A549 (cell line): ENCODE measurements at regions of chr17 and their contacts with region 1.

Region 1: GRCh38 chr17:40168262-40168832 is 8.9 kb upstream of the RAPGEFL1 start:
- DNase-seq: peak; percentile 77
- ATAC-seq: peak; percentile 76 to 83
- H3K4me3 ChIP-seq: no peak overlapping the region
- H3K27ac ChIP-seq: 0 out of 6 replicates have a peak overlapping the region, but pooled peaks of 1 of the 2 experiments have one; percentile 18
- H3K4me1 ChIP-seq: peaks cover 4% of the 10 kb centered on the region; the same call in 2 of the 3 replicates
- CTCF ChIP-seq: peak; percentile 84
- EP300 ChIP-seq: no peak
- POLR2A ChIP-seq: no peak
- RAD21 ChIP-seq: peak; percentile 79 to 81

Region 2: DNA sequence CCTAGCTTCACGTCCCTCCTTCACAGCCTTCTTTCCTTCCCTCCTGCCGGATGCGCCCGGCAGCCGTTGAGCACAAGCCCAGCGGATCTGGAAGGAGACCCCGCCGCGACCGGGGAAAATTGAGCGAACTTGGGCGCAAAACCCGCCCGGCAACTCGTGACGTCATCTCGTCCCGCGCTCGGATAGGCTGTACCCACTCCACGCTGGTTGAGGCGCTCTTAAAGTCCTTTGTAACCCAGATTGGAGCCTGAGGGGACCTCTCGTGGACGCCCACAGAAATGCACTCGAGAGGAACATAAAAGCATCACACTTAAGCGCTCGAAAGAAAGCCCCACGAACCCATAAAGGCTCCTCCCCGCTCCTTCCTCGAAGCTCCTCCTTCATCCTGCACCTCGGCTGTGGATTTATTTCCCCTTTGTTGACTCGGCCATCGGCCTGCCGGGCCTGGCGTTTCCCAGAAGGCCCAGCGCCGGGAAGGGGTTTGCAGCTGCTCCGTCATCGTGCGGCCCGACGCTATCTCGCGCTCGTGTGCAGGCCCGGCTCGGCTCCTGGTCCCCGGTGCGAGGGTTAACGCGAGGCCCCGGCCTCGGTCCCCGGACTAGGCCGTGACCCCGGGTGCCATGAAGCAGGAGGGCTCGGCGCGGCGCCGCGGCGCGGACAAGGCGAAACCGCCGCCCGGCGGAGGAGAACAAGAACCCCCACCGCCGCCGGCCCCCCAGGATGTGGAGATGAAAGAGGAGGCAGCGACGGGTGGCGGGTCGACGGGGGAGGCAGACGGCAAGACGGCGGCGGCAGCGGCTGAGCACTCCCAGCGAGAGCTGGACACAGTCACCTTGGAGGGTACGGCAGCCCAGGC is 187.8 kb before region 1 on chr17 and contains the start of gene PSMD3:
- CTCF ChIA-PET with region 1: interaction called, 11 read pairs
- POLR2A ChIA-PET with region 1: no interaction called
- DNase-seq: peak; percentile 97 to 100
- ATAC-seq: peak; percentile 91 to 94
- H3K4me3 ChIP-seq: peak within 1 kb of the TSS; percentile 89
- H3K27ac ChIP-seq: peak within 1 kb of the TSS; percentile 93 to 95
- H3K4me1 ChIP-seq: peaks cover 20% of the 10 kb centered on the region
- CTCF ChIP-seq: peak; percentile 79
- EP300 ChIP-seq: no peak
- POLR2A ChIP-seq: peak; percentile 87
- RAD21 ChIP-seq: peak; percentile 79 to 85
- polyA plus RNA-seq, gene PSMD3: 87.7 and 113 TPM in 2 replicates

Region 3: DNA sequence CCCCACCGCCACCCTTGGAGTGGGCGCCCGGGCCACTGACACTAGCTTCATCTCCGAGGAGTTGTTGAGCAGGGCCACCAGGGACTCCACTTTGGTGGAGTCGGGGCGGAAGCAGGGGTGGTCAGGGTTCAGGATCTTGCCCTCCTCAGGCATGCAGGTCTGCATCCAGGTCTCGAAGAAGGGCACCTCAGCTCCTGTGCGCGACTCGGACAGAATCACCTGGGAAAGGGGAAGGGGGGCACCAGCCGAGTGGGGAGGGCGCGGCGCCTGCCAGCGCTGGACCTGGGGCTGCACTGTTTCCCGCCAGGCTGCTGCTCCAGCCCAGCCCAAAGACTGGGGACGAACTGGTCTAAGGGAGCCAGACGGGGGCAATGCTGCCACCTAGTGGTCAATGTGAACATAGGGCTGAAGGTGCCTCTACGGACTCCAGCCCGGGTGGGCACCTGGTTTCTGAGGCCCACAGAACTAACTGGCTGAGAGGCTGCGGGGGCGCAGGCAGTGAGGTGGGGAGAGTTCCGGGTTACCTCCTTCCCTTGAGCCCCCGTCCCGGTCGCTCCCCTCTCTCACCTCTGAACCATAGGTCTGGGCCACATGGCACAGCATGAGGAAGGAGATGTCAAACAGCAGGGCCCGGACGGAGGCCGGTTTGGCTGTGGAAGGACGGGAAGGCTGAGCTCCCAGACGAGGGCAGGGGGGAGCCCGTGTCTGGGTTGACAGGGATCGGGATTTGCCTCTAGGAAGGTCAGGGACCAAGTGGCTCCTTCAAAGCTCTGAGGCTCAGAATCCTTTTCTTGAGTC is 141.3 kb before region 1 on chr17:
- CTCF ChIA-PET with region 1: interaction called, 31 read pairs
- POLR2A ChIA-PET with region 1: no interaction called
- DNase-seq: peak; percentile 83 to 93
- ATAC-seq: peak; percentile 84 to 97
- H3K4me3 ChIP-seq: no peak overlapping the region
- H3K27ac ChIP-seq: peak overlapping the region; percentile 30 to 56; a peak in 4 of 6 replicates
- H3K4me1 ChIP-seq: peaks cover 23% of the 10 kb centered on the region
- CTCF ChIP-seq: peak; percentile 96
- EP300 ChIP-seq: no peak
- POLR2A ChIP-seq: no peak
- RAD21 ChIP-seq: peak; percentile 77 to 79

Region 4: DNA sequence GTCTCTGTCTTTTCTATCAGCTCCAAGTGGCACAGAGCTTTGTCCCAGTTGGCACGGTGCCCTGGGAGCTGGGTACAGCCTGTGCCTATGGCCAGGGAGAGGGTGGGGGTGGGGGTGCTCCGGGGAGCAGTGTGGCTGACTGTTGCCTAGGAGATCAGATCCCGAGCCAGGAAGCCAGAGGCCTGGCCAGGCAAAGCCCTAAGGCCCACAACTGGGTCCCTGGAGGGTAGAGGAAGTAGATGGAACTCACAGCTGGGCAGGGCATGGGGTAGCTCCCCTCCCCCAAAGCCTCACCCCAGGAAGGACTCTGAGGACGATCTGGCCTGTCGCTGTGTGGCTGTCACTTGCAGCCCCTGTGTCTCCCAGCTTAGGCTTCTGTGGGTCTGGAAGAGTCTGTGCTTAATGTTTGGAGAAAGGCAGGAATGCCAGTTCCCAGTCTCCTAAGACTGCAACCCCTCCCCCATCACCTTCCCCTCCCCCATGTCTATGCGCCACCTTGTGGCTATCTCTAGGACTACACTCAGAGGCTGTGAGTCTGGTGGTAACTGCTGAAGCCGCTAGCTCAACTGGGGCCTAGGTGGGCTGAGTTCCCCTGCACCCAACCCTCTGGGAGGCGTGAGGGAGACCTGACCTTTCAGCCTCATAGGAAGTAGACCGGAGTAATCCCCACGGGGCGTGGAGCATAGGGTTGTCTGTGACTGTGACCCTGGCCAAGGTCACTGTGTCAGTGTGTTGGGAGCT is 93.0 kb before region 1 on chr17:
- CTCF ChIA-PET with region 1: interaction called, 15 read pairs
- POLR2A ChIA-PET with region 1: no interaction called
- DNase-seq: peak in 1 of 2 experiments; percentile 75
- ATAC-seq: peak; percentile 6 to 43; a peak in 3 of 6 replicates
- H3K4me3 ChIP-seq: 0 out of 3 replicates have a peak overlapping the region, but pooled peaks have one; percentile 2
- H3K27ac ChIP-seq: peak overlapping the region; percentile 95
- H3K4me1 ChIP-seq: peaks cover 59% of the 10 kb centered on the region
- CTCF ChIP-seq: peak; percentile 97
- EP300 ChIP-seq: no peak
- POLR2A ChIP-seq: no peak
- RAD21 ChIP-seq: peak; percentile 73 to 85

Region 5: DNA sequence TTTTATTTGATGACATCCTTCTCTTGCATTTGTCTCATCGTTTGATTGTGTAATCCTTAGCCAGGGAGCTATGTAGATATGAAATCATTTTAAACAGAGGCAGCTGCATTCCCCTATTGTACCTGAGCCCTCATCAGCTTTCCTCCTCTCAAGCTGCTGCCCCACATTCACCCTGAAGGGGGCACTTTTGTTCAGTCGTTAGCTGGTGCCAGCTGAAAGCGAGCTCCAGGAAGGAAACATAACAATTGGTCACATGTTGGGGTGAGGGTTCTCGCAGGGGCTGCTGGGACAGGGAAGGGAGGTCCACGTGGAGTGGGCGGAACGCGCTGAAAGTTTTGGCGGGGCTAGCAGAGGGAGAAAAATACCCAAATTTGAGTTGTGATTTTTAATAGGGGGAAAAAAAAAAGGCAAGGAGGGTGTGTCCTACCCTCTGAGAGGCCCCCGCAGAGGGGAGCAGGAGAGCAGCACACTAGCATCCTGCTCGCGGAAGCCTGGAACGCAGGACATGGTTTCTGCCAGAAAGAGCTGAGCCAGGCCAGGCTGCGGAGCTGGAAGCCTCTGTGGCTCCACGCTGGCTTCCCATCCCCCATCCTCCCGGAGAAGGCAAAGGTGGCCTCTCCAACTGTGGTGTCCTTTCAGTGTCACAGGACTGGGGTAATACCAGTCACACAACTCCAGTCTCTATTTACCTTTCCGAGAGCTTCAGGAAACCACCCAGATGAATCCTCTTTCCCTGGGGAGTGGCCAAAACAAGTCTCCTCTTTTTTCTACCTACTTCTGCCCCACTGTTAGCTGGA is 55.0 kb before region 1 on chr17:
- CTCF ChIA-PET with region 1: interaction called, 176 read pairs
- POLR2A ChIA-PET with region 1: interaction called, 19 read pairs
- DNase-seq: peak; percentile 97 to 100
- ATAC-seq: peak; percentile 77 to 87
- H3K4me3 ChIP-seq: peak overlapping the region; percentile 42
- H3K27ac ChIP-seq: peak overlapping the region; percentile 86 to 93
- H3K4me1 ChIP-seq: peaks cover 53% of the 10 kb centered on the region
- CTCF ChIP-seq: peak; percentile 35; the same call in 2 of the 3 replicates
- EP300 ChIP-seq: no peak
- POLR2A ChIP-seq: peak; percentile 62
- RAD21 ChIP-seq: peak; percentile 88 to 95; a peak in 4 of 5 replicates

Region 6: DNA sequence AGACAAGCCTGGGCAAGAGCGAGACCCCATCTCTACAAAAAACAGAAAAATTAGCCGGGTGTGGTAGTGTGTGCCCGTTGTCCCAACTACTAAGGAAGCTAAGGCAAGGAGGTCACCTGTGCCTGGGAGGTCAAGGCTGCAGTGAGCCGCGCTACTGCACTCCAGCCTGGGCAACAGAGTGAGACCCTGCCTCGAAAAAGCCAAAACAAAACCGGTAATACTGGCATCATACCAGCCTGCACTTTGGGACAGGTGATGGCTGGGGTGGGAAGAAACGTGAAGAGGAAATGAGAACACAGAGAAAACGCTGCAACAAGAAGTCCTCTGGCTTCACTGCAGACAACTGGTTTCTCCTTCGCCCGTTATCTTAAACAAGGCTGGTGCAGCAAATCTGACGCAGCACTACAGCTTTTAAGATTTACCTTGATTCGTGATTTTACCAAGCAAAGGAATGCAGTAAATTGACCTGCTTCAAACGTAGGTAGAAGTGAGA is 28.7 kb before region 1 on chr17:
- CTCF ChIA-PET with region 1: interaction called, 32 read pairs
- POLR2A ChIA-PET with region 1: interaction called, 5 read pairs
- DNase-seq: no peak
- ATAC-seq: peak; percentile 13 to 36
- H3K4me3 ChIP-seq: peak overlapping the region; percentile 58
- H3K27ac ChIP-seq: peak overlapping the region; percentile 91 to 98
- H3K4me1 ChIP-seq: peaks cover 16% of the 10 kb centered on the region; the same call in 2 of the 3 replicates
- CTCF ChIP-seq: no peak
- EP300 ChIP-seq: no peak
- POLR2A ChIP-seq: no peak
- RAD21 ChIP-seq: no peak

Region 7: DNA sequence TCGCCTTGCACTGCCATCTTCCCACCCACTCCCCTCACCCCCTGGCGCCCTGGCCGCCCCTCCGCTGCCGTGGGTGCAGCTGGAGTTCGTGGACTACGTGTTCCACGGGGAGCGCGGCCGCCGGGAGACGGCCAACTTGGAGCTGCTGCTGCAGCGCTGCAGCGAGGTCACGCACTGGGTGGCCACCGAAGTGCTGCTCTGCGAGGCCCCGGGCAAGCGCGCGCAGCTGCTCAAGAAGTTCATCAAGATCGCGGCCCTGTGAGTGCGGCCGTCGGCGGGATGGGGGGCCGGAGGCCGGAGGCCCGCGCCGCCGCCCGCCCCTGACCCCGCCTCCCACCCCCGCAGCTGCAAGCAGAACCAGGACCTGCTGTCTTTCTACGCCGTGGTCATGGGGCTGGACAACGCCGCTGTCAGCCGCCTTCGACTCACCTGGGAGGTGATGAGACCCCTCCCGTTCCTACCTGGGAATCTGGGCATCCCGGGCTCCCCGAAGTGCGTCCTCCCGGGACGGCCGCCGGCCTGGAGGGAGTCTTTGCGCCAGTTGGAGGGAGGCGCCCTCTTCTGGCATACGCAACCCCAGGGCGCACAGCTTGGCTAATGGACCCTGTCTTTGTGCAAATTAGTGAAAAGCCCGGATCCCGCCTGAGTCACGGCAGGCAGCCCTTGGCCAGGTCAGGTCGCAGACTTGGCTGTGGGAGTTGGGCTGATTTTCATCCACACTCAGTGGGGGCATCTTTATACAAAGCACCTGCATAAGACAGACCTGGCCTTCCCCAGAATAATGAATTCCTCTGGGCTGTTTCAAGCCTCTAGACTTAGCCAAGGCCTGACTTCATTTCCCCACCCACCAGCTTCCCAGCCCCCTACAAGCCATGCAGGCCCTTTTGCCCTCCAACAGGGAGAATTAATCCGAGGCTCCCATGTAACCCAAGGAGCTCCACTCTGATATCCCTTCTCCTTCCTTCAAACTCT is 23.2 kb after region 1 on chr17:
- CTCF ChIA-PET with region 1: interaction called, 195 read pairs
- POLR2A ChIA-PET with region 1: interaction called, 4 read pairs
- DNase-seq: peak; percentile 86 to 96
- ATAC-seq: peak; percentile 83 to 91
- H3K4me3 ChIP-seq: peak overlapping the region; percentile 47
- H3K27ac ChIP-seq: peak overlapping the region; percentile 50 to 70
- H3K4me1 ChIP-seq: peaks cover 17% of the 10 kb centered on the region
- CTCF ChIP-seq: peak; percentile 95
- EP300 ChIP-seq: no peak
- POLR2A ChIP-seq: no peak; the same call in 1 of the 2 replicates
- RAD21 ChIP-seq: peak; percentile 74 to 77

Region 8: GRCh38 chr17:40315678-40316610 is 147.6 kb after region 1 on chr17:
- CTCF ChIA-PET with region 1: no interaction called
- POLR2A ChIA-PET with region 1: no interaction called
- DNase-seq: no peak
- ATAC-seq: no peak
- H3K4me3 ChIP-seq: peak overlapping the region; percentile 81; the same call in 2 of the 3 replicates
- H3K27ac ChIP-seq: peak overlapping the region; percentile 95 to 97
- H3K4me1 ChIP-seq: peaks cover 86% of the 10 kb centered on the region
- CTCF ChIP-seq: no peak
- EP300 ChIP-seq: no peak
- POLR2A ChIP-seq: no peak
- RAD21 ChIP-seq: no peak